AG04449 (cell line): ENCODE measurements at regions of chr9 and their contacts with region 1.

Region 1: DNA sequence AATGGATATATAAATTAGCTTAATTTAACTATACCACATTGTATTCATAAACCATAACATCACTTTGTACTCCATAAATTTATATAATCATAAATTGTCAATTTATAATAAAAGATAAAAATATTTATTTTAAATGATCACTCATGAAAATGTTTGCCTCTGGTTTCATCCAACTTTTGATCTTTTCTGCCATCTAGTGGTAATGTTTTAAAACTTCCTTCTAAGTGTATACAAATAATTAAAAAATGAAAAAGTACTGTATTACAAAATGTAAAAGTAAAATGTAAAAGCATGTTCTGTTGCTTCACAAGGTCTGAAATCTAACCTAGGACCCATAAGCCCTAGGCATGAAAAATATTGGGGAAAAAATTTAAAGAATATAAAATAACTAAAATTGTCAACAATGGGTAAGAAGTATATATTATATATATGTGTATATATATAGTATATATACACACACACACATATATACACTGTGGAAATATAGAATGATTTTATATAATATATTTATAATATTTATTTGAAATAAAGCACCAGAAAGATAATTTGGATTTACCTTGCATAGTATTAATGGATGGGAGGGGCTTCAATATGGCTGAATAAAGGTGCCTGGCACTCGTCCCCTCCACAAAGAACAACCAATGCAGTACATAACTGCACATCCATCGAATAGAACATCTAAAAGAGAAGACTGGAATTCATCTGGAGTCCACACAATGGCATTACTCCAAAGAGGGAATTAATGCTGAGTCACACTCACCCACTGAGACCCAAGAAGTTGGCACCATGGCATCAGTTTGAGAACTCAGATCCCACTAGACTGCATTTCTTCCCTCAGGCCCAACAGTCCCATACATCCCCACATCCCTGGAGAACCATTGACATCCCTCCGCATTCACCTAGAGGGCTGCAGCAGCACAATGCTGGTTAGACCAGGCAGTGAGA is 32.5 kb downstream of the ANXA1 start:
- DNase-seq: no peak
- H3K4me3 ChIP-seq: no peak overlapping the region
- CTCF ChIP-seq: no peak

Region 2: DNA sequence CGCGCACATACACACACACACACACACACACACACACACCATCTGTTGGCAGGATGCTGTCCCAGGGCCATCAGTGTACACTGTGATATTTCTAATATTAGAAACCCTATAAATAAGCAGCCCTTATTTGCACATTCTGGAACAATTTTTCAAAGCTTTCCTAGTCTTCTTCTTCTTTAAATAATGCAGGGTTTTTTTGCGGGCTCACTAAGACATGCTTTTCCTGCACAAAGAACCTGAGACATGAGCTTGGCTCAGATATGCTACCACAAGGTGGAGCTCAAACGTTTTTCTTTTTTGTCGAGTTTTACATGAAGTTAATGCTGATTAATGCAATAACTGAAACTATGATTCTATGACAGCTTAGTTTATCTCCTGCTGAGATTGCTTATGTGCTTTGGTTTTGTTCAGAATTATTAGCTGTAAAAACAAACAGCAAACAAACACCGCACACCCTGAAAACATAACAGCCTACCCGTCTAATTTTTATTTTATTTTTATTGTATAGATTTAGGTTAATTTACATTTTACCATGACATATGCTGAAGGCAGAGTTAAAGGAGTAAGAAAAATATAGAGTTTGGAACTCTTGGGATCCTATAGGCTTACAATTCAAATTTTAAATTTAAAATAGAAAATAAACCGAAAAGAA is 327.1 kb before region 1 on chr9:
- CTCF ChIA-PET with region 1: interaction called, 41 read pairs
- POLR2A ChIA-PET with region 1: no interaction called
- DNase-seq: peak; percentile 29
- H3K4me3 ChIP-seq: no peak overlapping the region
- CTCF ChIP-seq: peak; percentile 46

Region 3: DNA sequence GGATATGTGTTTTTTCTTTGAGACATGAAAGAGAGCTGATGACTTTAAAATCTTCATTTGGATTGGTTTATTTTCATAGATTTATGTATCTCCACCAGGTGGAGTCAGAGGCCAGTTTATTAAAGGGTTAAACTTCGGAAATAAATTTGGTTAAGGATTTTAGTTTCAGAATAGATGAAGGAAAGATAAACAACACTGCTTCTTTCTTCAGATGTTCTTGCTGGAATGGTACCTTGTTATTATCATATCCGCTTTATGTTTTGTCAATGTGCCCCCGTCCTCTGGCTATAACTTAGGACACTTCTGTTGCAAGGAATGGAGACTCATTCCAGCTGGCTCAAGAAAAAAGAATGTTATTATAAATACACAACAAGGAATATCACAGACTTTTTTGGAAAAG is 312.5 kb before region 1 on chr9:
- CTCF ChIA-PET with region 1: interaction called, 13 read pairs
- POLR2A ChIA-PET with region 1: no interaction called
- DNase-seq: no peak
- H3K4me3 ChIP-seq: no peak overlapping the region
- CTCF ChIP-seq: no peak

Region 4: GRCh38 chr9:73081979-73082657 is 102.1 kb before region 1 on chr9:
- CTCF ChIA-PET with region 1: interaction called, 12 read pairs
- POLR2A ChIA-PET with region 1: no interaction called
- DNase-seq: no peak
- H3K4me3 ChIP-seq: no peak overlapping the region
- CTCF ChIP-seq: peak; percentile 66

Region 5: GRCh38 chr9:73104342-73104741 is 79.8 kb before region 1 on chr9:
- CTCF ChIA-PET with region 1: interaction called, 193 read pairs
- POLR2A ChIA-PET with region 1: interaction called, 4 read pairs
- DNase-seq: no peak
- H3K4me3 ChIP-seq: no peak overlapping the region
- CTCF ChIP-seq: no peak

Region 6: DNA sequence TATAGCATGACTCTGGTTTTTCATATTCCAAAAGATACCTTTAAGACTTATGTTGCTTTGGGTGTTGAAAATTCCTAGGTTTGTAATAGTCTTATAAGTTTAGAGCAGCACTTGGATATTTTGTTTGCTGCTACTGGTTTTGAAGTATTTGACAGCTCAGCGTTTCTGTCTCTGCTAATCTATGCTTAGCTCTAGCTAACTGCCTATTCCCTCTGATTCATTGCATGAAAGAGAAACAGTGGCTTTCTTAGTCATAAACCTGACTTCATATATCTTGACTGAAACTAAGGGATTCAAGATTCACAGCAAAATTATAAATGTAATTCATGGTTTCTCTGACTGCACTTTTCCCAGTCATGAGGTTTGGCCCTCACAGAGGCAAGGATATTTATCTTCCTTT is 68.2 kb before region 1 on chr9:
- CTCF ChIA-PET with region 1: interaction called, 193 read pairs
- POLR2A ChIA-PET with region 1: no interaction called
- DNase-seq: no peak
- H3K4me3 ChIP-seq: no peak overlapping the region
- CTCF ChIP-seq: no peak

Region 7: GRCh38 chr9:73200694-73201452 is 16.7 kb after region 1 on chr9:
- CTCF ChIA-PET with region 1: interaction called, 10 read pairs
- POLR2A ChIA-PET with region 1: no interaction called
- DNase-seq: no peak
- H3K4me3 ChIP-seq: no peak overlapping the region
- CTCF ChIP-seq: peak; percentile 12